ENCODE measurements at regions of chr6 and their contacts with region 1.

Region 1: DNA sequence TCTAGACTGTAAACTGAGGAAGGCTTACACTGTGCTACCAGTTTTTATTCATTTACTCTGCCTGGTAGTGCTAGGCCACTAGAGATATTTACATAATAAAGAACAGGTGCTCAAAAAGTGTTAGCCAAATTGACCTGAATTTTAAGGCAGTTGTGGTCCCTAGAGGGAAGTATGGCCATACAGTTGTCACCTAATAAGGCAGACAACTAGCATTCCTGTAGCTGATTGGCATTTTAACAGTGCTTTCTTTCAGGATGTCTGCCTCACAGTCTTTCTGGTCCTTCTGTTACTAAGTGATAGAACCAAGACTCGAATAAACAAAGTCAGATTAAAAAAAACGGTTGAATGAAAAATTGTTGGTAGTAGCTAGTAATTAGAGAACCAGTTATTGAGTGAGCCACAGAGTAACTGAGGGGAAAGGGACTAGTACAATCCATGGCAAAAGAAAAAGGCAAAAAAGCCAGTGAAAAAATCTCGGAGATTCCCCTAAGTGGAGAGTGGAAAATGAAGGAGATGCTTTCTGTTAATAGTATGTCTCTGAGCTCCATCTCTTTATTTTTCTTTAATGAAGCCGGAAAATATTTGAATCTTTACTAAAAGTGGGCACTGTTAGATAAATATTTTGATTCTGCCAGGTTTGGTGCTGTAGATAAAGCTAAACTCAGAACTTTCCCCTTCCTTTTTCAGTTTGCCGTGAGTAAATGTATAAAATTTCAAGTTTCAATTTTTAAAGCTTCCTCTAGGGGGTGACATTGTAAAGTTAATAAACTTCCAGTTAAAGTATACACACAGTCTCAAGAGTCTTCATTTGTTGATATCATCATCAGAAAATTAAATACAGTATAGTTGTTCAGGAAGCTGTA is 9.1 kb downstream of the VTA1 start:
- DNase-seq: peak; percentile 2
- ATAC-seq: peak; percentile 62; the same call in 1 of the 2 replicates
- H3K4me3 ChIP-seq: no peak overlapping the region
- H3K27ac ChIP-seq: no peak overlapping the region
- H3K4me1 ChIP-seq: no peaks in the 10 kb centered on the region
- H3K27me3 ChIP-seq: no peaks in the 10 kb centered on the region
- CTCF ChIP-seq: peak in 2 of 3 experiments; percentile 50 to 58; a peak in 3 of 6 replicates
- POLR2A ChIP-seq: no peak
- RAD21 ChIP-seq: peak; percentile 57

Region 2: DNA sequence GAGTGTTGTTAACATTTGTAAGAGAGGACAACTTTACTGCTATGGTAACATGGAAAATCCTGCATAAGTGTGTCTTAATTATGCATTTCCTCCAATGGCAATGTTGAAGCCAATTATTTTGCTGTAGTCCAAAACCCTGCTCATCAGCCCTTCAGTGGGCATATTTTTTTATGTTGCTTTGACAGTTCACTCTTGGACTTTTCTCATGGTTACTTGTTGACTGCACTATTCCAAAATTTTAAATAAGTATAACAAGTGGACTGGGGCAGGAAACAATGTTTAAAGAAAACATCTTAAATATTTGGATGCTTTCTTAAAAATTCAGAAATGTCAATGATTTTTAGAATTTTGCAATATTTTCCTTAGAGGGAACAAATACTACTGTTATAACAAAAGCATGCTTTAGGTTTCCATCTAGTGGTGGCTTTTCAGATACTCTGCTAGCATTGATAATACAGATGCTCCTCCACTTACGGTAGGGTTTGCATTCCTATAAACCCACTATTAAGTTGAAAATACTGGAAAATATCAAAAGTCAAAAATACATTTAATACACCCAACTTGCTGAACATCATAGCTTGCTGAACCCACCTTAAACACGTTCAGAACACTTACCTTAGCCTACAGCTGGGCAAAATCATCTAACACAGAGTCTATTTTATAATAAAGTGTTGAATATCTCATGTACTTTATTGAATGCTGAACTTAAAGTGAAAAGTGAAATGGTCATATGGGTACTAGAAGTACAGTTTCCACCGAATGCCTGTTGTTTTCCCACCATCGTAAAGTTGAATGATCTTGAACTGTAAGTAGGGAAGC is 232.1 kb after region 1 on chr6:
- CTCF ChIA-PET with region 1: interaction called, 7 read pairs
- POLR2A ChIA-PET with region 1: no interaction called
- RAD21 ChIA-PET with region 1: interaction called in 1 of 2 experiments, 3 read pairs
- intact Hi-C with region 1: loop called (anchors 1 kb)
- DNase-seq: no peak
- ATAC-seq: peak; percentile 83
- H3K4me3 ChIP-seq: no peak overlapping the region
- H3K27ac ChIP-seq: peak overlapping the region; percentile 10; the same call in 1 of the 2 replicates
- H3K4me1 ChIP-seq: peaks cover 0 to 4% of the 10 kb centered on the region in 2 experiments; a peak in 1 of 4 replicates
- H3K27me3 ChIP-seq: no peaks in the 10 kb centered on the region
- CTCF ChIP-seq: peak; percentile 56 to 72 (median 64); a peak in 5 of 6 replicates
- POLR2A ChIP-seq: no peak
- RAD21 ChIP-seq: peak; percentile 81

Measured in HCT116 (cell line).